ENCODE measurements at regions of chr6 and their contacts with region 1.

Region 1: GRCh38 chr6:33317669-33318425 is at the start of gene ZBTB22:
- DNase-seq: peak; percentile 96 to 99 (median 97)
- H3K4me3 ChIP-seq: peak within 1 kb of the TSS; percentile 73 to 100
- H3K4me3 Mint-ChIP-seq: peak within 1 kb of the TSS; percentile 98 to 100 (median 99)
- H3K27ac ChIP-seq: peak within 1 kb of the TSS; percentile 83
- H3K27ac Mint-ChIP-seq: peak within 1 kb of the TSS; percentile 98 to 99 (median 98)
- H3K4me1 ChIP-seq: peaks cover 73% of the 10 kb centered on the region
- H3K4me1 Mint-ChIP-seq: peaks cover 40 to 100% (median 62%) of the 10 kb centered on the region in 4 donors
- H3K27me3 ChIP-seq: no peaks in the 10 kb centered on the region
- H3K27me3 Mint-ChIP-seq: no peaks in the 10 kb centered on the region
- total RNA-seq, gene ZBTB22: 28.6 to 28.7 TPM

Region 2: DNA sequence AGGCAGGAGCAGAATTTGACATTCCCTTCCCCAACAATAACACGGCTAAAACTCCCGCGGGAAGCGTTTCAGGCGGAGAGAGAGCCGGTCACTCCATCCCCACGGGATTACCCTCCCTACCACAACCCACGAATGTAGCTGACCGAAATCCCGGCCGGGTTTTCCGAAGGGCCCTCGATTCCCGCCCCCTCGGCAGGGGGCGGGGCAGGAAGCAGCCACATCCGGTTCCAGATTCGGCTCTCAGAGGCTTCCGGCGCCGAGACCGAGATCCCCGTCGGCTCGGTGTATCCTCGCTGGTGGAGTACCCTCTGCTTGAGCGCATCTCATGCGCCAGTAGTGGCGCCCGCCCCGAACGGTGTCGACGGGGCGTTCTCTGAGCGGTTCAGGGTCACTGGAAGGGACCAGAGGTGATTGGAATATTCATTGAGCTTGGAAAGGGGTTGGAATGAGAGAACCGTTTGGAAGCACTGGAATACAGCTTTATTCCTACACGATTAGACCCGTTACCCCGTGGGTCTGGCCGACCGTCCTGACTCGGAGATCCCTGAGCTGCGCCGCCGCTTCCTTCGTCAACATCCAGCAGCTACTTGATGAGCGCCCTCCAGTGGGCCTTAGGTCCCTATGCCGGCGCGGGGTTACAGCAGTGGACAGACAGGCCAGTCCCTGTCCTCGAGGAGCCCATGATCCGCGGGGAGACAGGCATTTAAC is 18.5 kb before region 1 on chr6:
- CTCF ChIA-PET with region 1: interaction called, 35 read pairs
- POLR2A ChIA-PET with region 1: interaction called, 87 read pairs
- intact Hi-C with region 1: loop called (anchors 1 kb)
- DNase-seq: peak; percentile 91 to 94 (median 93)
- H3K4me3 ChIP-seq: peak overlapping the region; percentile 71 to 97
- H3K4me3 Mint-ChIP-seq: peak overlapping the region; percentile 99
- H3K27ac ChIP-seq: peak overlapping the region; percentile 94
- H3K27ac Mint-ChIP-seq: peak overlapping the region; percentile 96 to 100 (median 99)
- H3K4me1 ChIP-seq: peaks cover 27% of the 10 kb centered on the region
- H3K4me1 Mint-ChIP-seq: peaks cover 22 to 42% (median 31%) of the 10 kb centered on the region in 4 donors
- H3K27me3 ChIP-seq: no peaks in the 10 kb centered on the region
- H3K27me3 Mint-ChIP-seq: peaks cover 0 to 4% of the 10 kb centered on the region in 2 donors

Region 3: GRCh38 chr6:33417903-33418689 is 100.2 kb after region 1 on chr6 and contains the start of gene CUTA:
- CTCF ChIA-PET with region 1: no interaction called
- POLR2A ChIA-PET with region 1: interaction called, 13 read pairs
- intact Hi-C with region 1: loop called (anchors 1 kb)
- DNase-seq: peak; percentile 97 to 100 (median 100)
- H3K4me3 ChIP-seq: peak within 1 kb of the TSS; percentile 82 to 94
- H3K4me3 Mint-ChIP-seq: peak within 1 kb of the TSS; percentile 87 to 97 (median 94)
- H3K27ac ChIP-seq: peak within 1 kb of the TSS; percentile 97
- H3K27ac Mint-ChIP-seq: peak within 1 kb of the TSS; percentile 99 to 100 (median 99)
- H3K4me1 ChIP-seq: peaks cover 72% of the 10 kb centered on the region
- H3K4me1 Mint-ChIP-seq: peaks cover 43 to 87% (median 61%) of the 10 kb centered on the region in 4 donors
- H3K27me3 ChIP-seq: no peaks in the 10 kb centered on the region
- H3K27me3 Mint-ChIP-seq: no peaks in the 10 kb centered on the region
- total RNA-seq, gene CUTA: 210 to 217 TPM

Region 4: DNA sequence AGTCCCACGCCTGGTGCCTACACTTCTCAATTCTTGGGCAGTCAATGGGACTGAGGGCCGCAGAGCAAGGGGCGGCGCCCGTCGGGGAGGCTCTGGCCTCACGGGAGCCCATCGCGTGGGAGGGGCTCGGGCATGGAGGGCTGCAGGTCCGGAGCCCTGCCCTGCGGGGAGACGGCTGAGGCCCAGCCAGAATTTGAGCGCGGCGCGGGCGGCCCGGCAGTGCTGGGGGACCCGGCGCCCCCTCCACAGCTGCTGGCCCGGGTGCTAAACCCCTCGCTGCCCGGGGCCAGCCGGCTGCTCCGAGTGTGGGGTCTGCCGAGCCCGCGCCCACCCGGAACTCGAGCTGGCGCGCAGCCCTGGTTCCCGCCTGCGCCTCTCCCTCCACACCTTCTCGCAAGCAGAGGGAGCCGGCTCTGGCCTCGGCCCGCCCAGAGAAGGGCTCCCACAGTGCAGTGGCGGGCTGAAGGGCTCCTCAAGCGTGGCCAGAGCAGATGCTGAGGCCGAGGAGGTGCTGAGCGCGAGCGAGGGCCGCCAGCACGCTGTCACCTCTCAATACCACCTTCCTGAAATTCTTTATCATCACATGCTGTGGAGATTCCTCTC is 203.7 kb after region 1 on chr6:
- CTCF ChIA-PET with region 1: no interaction called
- POLR2A ChIA-PET with region 1: no interaction called
- intact Hi-C with region 1: no loop called
- DNase-seq: no peak
- H3K4me3 ChIP-seq: no peak overlapping the region
- H3K4me3 Mint-ChIP-seq: no peak overlapping the region
- H3K27ac ChIP-seq: no peak overlapping the region
- H3K27ac Mint-ChIP-seq: peak overlapping the region in 1 of 7 donors; percentile 29
- H3K4me1 ChIP-seq: no peaks in the 10 kb centered on the region
- H3K4me1 Mint-ChIP-seq: peaks cover 0 to 3% (median 0%) of the 10 kb centered on the region in 4 donors
- H3K27me3 ChIP-seq: no peaks in the 10 kb centered on the region
- H3K27me3 Mint-ChIP-seq: no peaks in the 10 kb centered on the region

Region 5: GRCh38 chr6:34082864-34083626 is 765.2 kb after region 1 on chr6:
- CTCF ChIA-PET with region 1: no interaction called
- POLR2A ChIA-PET with region 1: no interaction called
- intact Hi-C with region 1: no loop called
- DNase-seq: peak in 1 of 5 donors; percentile 4
- H3K4me3 ChIP-seq: no peak overlapping the region
- H3K4me3 Mint-ChIP-seq: no peak overlapping the region
- H3K27ac ChIP-seq: no peak overlapping the region
- H3K27ac Mint-ChIP-seq: no peak overlapping the region
- H3K4me1 ChIP-seq: no peaks in the 10 kb centered on the region
- H3K4me1 Mint-ChIP-seq: no peaks in the 10 kb centered on the region
- H3K27me3 ChIP-seq: no peaks in the 10 kb centered on the region
- H3K27me3 Mint-ChIP-seq: peaks cover 2 to 4% of the 10 kb centered on the region in 2 donors

Measured in CD4-positive, alpha-beta memory T cell (primary cell).